ENCODE measurements at regions of chr6 and their contacts with region 1.

Region 1: DNA sequence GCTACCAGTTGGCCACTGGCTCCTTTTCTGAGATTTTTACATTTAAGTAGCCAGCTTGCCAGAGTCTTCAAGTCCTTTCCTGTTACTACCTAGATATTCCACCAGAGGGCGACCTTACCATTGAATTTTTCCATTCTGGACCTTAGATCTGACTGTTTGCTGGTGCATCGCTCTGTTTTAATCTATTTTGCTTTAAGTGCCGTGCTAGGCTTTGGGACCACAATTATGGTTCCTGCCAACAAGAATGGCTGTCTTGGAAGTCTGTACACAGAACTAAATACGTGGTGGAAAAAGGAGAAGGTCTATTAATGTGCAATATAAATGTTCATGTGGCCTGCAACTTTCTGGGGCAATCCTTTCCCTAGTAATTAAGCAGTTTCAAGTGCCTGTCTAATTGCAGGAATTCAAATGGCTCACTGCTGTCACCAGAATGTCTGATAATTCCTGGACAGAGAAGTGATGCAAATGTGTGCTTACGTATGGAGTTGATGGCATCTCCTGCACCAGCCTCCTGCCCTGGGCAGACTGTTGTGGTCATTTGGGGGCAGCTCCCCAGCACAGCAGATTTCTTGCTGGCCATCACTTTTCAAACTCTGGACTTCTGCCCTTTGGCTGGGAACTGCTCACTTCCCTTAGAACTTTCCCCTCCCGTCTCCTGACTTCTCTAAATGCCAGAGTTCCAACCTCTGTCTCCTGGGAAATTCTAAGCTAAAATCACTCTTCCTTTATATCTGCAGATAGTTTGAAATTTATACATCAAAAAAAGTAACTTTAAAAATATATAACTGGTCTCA is 5.6 kb upstream of the HLA-DOA start:
- DNase-seq: no peak
- ATAC-seq: peak; percentile 51 to 53
- H3K4me3 ChIP-seq: no peak overlapping the region
- H3K27ac ChIP-seq: peak overlapping the region; percentile 14
- H3K4me1 ChIP-seq: peaks cover 8% of the 10 kb centered on the region
- H3K27me3 ChIP-seq: no peaks in the 10 kb centered on the region

Region 2: GRCh38 chr6:33082702-33083101 is 67.7 kb after region 1 on chr6:
- intact Hi-C with region 1: loop called in 2 of 4 experiments (anchors 5 kb)
- DNase-seq: peak in 2 of 3 donors; percentile 37 to 83
- ATAC-seq: peak in 1 of 2 donors; percentile 8
- H3K4me3 ChIP-seq: no peak overlapping the region
- H3K27ac ChIP-seq: no peak overlapping the region
- H3K4me1 ChIP-seq: peaks cover 12% of the 10 kb centered on the region
- H3K27me3 ChIP-seq: no peaks in the 10 kb centered on the region

Region 3: DNA sequence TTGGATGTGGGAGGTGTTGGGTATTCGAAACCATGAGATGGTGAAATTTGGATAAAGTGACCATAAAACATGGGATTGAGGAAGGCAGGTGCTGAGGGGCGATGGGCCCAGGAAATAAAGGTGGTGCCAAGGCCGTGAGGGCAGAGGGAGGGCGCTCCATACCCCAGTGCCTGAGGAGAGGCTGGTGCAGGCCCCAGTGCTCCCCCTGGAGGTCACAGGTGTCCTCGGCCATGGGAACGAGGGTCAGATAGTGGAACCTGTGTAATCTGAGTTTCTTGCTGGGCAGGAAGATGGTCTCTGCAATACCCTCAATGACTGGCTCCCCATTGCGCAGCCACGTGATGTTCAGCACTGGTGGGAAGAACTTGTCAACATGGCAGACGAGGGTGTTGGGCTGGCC is 76.9 kb after region 1 on chr6:
- intact Hi-C with region 1: loop called in 2 of 4 experiments (anchors 5 to 10 kb)
- DNase-seq: peak; percentile 47 to 71 (median 64)
- ATAC-seq: peak; percentile 71 to 72
- H3K4me3 ChIP-seq: no peak overlapping the region
- H3K27ac ChIP-seq: no peak overlapping the region
- H3K4me1 ChIP-seq: no peaks in the 10 kb centered on the region
- H3K27me3 ChIP-seq: no peaks in the 10 kb centered on the region

Region 4: DNA sequence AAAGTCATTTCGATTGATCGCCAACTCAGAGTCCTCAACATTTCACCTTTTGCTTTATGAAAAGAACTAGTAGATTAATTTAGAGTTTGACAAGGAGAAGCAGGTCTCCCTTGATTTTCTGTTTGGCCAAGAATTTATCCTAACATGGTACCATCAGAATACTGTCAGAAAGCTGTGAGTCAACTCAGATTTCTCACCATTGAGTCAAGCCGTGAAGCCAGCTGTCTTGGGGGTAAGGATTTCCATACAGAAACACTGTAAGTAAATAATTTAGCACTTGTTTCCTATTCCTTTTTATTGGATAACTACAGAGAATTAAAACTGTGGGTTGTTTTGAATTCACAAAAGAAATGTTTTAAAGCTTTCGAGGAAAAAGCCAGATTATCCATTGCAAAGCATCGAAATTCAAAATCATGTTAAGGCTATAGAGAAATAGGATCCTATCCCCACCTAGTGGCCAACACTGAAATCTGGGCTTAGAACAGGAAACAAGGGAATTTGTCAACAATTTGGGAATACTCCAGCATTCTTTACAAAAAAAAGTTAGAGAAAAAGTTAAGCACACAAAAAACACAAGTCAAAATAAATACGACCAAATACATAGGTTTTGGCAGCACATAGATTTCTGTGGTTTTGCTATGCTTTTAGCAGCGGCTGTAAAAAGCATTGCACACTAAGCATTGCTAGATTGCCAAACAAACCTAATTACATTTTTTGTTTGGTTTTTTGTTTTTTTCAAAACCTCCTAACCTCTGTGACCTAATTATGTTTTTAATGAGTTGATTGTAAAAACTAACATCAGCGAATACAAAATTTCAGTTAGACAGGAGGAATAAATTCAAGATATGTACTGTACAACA is 133.0 kb after region 1 on chr6:
- intact Hi-C with region 1: loop called in 2 of 4 experiments (anchors 5 to 10 kb)
- DNase-seq: no peak
- ATAC-seq: peak in 1 of 2 donors; percentile 43
- H3K4me3 ChIP-seq: no peak overlapping the region
- H3K27ac ChIP-seq: no peak overlapping the region
- H3K4me1 ChIP-seq: peaks cover 1% of the 10 kb centered on the region
- H3K27me3 ChIP-seq: no peaks in the 10 kb centered on the region